ENCODE measurements at regions of chr11 and their contacts with region 1.

Region 1: DNA sequence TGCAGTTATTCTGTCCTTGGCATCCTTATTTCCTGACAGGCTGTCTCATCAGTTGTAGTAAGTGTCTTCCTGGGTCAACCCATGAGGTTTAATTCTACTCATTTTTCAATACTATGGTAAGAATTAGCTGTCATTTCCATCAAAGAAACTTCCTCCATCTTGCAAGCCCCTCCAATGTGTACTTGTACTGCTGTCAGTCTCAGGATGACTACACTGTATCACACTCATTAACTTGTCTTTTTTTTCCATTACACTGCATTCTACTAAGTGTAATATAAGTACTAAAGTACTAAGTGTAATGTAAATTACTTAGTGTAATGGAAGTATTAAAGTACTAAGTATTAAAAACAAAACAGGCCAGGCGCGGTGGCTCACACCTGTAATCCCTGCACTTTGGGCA is 102.8 kb downstream of the CWF19L2 start:
- DNase-seq: no peak

Region 2: GRCh38 chr11:107538821-107539220 is 184.0 kb after region 1 on chr11:
- intact Hi-C with region 1: loop called in 1 of 2 experiments (anchors 5 kb)
- DNase-seq: no peak

Region 3: DNA sequence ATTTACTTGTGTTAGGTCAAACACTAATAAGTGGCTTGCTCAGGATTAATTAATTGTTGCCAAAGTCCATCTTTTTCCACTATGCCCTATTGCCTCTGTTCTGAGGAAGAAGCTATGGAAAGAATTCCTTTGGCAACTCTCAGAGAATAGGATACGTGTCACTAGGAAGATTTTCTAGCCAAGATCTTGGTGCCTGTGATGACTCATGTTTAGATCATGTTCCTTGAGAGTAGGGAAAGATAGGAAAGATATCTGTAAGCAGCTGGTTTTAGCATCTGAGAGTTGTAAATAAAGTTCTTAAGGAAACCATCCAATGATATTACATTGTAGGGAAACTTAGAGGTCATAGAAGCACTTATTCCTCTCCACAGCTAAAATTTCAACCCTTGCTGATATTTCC is 341.4 kb after region 1 on chr11:
- intact Hi-C with region 1: no loop called
- DNase-seq: no peak